ENCODE measurements at regions of chr13 and their contacts with region 1.

Region 1: DNA sequence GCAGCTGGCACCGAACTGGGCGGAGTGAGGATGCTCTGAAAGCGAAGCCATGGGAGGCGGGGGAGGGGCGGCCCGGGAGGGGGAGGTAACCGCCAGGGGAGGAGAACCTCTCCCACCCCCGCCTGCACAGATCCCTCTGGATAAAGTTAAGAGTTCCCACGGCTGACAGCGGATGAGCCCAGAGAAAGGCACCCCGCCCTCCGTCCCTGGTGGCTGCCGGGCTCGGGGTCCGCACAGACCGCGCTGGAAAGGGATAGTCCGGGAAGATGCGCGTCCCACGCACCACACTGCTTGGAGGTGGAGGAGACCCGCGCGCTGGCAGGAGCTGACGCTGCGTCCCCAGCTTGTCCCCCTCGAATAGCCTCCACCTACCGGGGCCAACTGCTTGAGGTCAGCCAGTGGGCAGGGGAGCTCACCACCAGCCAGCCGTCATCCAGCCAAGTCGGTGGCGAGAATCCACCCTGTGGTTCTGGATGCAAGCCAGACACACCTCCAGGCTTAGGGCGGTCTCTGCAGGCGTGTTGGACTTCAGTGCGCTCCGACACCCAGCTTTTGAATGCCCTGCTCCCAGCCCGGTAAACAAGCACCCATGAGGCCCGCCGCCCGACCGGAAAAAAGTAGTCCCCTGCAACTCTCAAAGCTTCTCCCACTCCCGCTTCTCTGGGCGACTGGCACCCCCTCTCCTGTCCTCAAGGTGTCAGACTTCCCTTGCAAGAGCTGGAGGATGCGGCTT is at the start of gene TRPC4:
- DNase-seq: peak; percentile 78
- H3K4me3 Mint-ChIP-seq: peak within 1 kb of the TSS; percentile 71
- H3K27ac Mint-ChIP-seq: no peak within 1 kb of the TSS
- H3K4me1 Mint-ChIP-seq: peaks cover 12% of the 10 kb centered on the region
- H3K27me3 Mint-ChIP-seq: peaks cover 12% of the 10 kb centered on the region
- CTCF ChIP-seq: peak; percentile 67
- total RNA-seq, gene TRPC4: not detected in 2 replicates

Region 2: DNA sequence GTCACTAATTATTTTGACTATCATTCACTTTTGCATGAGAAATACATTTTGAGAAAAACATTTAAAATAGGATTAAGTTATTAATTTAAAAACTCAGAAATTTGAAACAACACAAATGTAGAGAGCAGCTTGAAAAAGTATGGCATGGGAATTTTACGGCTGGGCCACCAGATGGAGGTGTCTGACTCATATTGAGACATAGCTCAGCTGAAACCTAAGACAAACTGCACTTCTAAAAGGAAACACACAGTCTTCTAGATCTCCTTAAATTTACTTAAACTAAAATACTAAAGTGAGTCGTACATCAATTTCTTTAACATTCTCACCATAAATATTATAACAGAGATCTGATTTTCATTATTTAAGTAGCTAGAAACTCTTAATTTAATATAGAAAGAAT is 229.4 kb before region 1 on chr13:
- CTCF ChIA-PET with region 1: interaction called, 13 read pairs
- POLR2A ChIA-PET with region 1: no interaction called
- intact Hi-C with region 1: loop called (anchors 5 kb)
- DNase-seq: peak; percentile 53
- H3K4me3 Mint-ChIP-seq: no peak overlapping the region
- H3K27ac Mint-ChIP-seq: no peak overlapping the region
- H3K4me1 Mint-ChIP-seq: no peaks in the 10 kb centered on the region
- H3K27me3 Mint-ChIP-seq: no peaks in the 10 kb centered on the region
- CTCF ChIP-seq: peak; percentile 59

Region 3: GRCh38 chr13:37995092-37995491 is 125.2 kb after region 1 on chr13:
- CTCF ChIA-PET with region 1: no interaction called
- POLR2A ChIA-PET with region 1: no interaction called
- intact Hi-C with region 1: no loop called
- DNase-seq: peak; percentile 1
- H3K4me3 Mint-ChIP-seq: no peak overlapping the region
- H3K27ac Mint-ChIP-seq: no peak overlapping the region
- H3K4me1 Mint-ChIP-seq: no peaks in the 10 kb centered on the region
- H3K27me3 Mint-ChIP-seq: no peaks in the 10 kb centered on the region
- CTCF ChIP-seq: no peak

Region 4: DNA sequence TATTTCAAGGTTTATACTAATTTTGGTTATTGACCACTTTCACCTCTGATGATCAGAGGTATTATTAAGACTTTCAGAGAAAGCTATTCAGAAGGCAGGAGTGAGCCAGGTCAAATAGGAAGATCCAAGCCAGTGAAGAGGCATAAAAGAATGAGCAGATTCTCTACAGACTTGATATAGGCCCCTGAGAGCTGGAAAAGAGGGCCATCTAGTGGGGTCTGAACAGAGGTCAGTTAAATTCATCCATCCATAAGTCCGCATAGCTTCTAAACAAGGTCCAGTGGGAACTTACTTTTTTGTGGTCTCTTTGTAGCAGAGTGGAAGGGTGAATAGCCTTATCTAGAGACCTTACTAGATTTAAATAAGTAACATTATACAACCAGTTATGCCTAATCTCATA is 353.2 kb after region 1 on chr13:
- CTCF ChIA-PET with region 1: no interaction called
- POLR2A ChIA-PET with region 1: no interaction called
- intact Hi-C with region 1: loop called (anchors 2 kb)
- DNase-seq: peak; percentile 32
- H3K4me3 Mint-ChIP-seq: no peak overlapping the region
- H3K27ac Mint-ChIP-seq: no peak overlapping the region
- H3K4me1 Mint-ChIP-seq: no peaks in the 10 kb centered on the region
- H3K27me3 Mint-ChIP-seq: no peaks in the 10 kb centered on the region
- CTCF ChIP-seq: no peak

Region 5: DNA sequence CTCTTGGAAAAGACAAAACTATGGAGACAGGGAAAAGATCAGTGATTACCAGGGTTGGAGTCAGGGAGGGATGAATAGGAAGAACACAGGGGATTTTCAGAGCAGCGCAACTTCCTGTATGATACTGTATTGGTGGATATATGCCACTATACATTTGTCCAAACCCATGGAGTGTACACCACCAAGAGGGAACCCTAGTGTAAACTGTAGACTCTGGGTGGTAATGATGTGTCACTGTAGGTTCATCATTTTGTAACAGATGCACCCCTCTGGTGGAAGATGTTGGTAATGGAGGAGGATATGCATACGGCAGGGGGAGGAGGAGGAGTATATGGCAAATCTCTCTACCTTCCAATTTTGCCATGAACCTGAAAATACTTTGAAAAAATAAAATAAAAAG is 547.8 kb after region 1 on chr13:
- CTCF ChIA-PET with region 1: interaction called, 4 read pairs
- POLR2A ChIA-PET with region 1: no interaction called
- intact Hi-C with region 1: loop called (anchors 5 kb)
- DNase-seq: peak; percentile 53
- H3K4me3 Mint-ChIP-seq: no peak overlapping the region
- H3K27ac Mint-ChIP-seq: no peak overlapping the region
- H3K4me1 Mint-ChIP-seq: no peaks in the 10 kb centered on the region
- H3K27me3 Mint-ChIP-seq: no peaks in the 10 kb centered on the region
- CTCF ChIP-seq: peak; percentile 32

Region 6: DNA sequence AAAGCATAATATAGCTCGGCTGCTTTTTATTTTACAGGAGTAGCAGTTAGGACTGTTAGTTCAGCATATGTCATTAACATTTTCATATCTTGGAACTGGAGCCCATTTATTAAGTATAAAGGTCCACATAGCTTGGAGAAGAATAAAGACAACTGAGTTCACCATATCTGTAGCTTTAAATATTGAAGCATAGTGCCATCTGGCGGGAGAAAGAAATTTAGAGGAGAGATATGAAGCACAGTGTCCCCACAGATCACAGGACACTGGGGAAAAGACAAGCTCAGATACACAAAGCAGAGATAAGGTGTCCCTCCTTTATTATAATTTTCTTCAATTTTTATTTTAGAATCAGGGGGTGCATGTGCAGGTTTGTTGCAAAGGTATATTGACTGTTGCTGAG is 712.2 kb after region 1 on chr13:
- CTCF ChIA-PET with region 1: interaction called, 16 read pairs
- POLR2A ChIA-PET with region 1: no interaction called
- intact Hi-C with region 1: loop called (anchors 1 kb)
- DNase-seq: peak; percentile 61
- H3K4me3 Mint-ChIP-seq: no peak overlapping the region
- H3K27ac Mint-ChIP-seq: no peak overlapping the region
- H3K4me1 Mint-ChIP-seq: no peaks in the 10 kb centered on the region
- H3K27me3 Mint-ChIP-seq: peaks cover 17% of the 10 kb centered on the region
- CTCF ChIP-seq: peak; percentile 32

Measured in MCF 10A (cell line).